B cell (primary cell): ENCODE measurements at regions of chr17 and their contacts with region 1.

Region 1: DNA sequence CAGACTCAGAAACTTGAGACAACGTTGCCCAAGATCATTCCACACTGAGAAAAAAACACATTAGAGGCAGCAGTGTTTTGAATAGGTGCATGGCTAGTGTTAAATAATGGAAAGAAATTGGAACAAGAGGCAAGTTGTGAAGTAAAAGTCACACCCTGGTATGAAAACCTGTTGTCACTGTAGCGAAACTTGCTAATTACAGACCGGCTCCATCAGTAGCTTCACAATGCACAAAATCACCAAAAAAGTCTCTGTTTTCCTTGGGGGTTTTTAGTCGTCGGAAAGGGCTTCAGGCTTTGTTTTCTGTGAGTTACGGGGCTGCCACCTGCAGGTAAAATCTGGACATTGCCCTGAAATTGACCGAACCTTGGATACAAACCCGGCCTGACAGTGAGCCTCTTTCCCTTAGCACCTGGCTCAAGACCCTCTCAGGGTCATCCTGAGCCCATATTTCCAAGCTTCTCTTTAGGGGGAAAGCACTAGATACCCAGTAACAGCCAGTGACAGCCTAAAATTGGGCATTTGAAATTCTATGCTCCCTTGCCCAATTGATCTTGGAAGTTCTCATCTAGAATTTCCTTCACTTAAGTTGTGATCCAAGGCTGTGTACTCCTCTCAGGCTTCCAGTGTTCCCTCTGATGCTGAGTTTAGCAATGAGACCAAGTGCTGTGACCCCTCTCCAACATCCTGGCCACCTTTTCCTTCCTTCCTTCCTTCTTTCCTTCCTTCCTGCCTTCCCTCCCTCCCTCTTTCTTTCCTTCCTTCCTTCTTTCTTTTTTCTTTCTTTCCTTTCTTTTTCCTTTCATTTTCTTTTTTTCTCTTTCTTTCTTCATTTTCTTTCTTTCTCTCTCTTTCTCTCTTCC is 7.2 kb upstream of the GRB2 start:
- DNase-seq: peak; percentile 90
- ATAC-seq: peak; percentile 94
- H3K4me3 ChIP-seq: peak overlapping the region in 4 of 5 experiments; percentile 9 to 30 (median 23)
- H3K4me3 Mint-ChIP-seq: peak overlapping the region; percentile 68
- H3K27ac ChIP-seq: no peak overlapping the region
- H3K27ac Mint-ChIP-seq: peak overlapping the region; percentile 62
- H3K4me1 ChIP-seq: peaks cover 7 to 14% of the 10 kb centered on the region in 2 donors
- H3K4me1 Mint-ChIP-seq: peaks cover 13% of the 10 kb centered on the region
- H3K27me3 ChIP-seq: no peaks in the 10 kb centered on the region
- H3K27me3 Mint-ChIP-seq: no peaks in the 10 kb centered on the region
- CTCF ChIP-seq: peak; percentile 79

Region 2: DNA sequence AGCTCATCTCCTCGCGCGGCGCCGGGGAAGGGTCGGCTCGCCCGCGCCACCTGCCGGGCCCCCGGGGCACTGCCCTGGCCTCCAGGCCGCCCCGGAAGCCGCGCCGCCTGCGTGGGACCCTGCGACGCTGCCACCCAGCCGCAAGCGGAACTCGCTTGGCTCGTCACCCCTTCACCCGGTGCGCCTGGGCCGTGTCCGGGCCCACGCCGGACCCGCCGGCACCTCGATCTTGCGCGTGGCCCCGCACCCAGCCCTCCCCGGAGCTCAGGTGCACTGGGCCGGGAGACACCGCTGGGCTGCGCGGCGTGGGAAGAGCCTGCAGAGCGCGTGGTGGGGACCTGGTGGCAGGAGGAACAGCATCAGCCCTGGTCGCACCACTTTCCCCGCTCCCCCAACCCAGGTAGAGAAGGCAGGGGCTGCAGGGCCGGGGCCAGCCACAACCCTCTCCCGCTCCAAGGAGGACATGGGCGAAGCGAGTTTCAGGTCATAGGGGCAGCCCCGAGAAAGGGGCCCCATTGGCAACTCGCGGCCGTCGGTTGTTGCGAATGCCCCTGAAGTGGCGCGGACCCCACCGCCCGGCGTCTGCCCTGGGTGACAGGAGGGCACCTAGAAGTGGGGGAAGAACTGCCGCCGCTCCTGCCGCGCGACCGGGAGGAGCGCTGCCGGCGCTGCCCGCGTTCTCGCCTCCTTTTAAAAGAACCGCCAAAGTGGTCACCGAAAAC is 141.3 kb before region 1 on chr17:
- CTCF ChIA-PET with region 1: interaction called, 33 read pairs
- POLR2A ChIA-PET with region 1: interaction called, 6 read pairs
- intact Hi-C with region 1: loop called (anchors 1 kb)
- DNase-seq: peak; percentile 94
- ATAC-seq: peak; percentile 90
- H3K4me3 ChIP-seq: peak overlapping the region; percentile 26 to 93 (median 74)
- H3K4me3 Mint-ChIP-seq: peak overlapping the region; percentile 88
- H3K27ac ChIP-seq: peak overlapping the region; percentile 78 to 83
- H3K27ac Mint-ChIP-seq: peak overlapping the region; percentile 82
- H3K4me1 ChIP-seq: peaks cover 17 to 28% of the 10 kb centered on the region in 2 donors
- H3K4me1 Mint-ChIP-seq: peaks cover 23% of the 10 kb centered on the region
- H3K27me3 ChIP-seq: no peaks in the 10 kb centered on the region
- H3K27me3 Mint-ChIP-seq: no peaks in the 10 kb centered on the region
- CTCF ChIP-seq: peak; percentile 73

Region 3: DNA sequence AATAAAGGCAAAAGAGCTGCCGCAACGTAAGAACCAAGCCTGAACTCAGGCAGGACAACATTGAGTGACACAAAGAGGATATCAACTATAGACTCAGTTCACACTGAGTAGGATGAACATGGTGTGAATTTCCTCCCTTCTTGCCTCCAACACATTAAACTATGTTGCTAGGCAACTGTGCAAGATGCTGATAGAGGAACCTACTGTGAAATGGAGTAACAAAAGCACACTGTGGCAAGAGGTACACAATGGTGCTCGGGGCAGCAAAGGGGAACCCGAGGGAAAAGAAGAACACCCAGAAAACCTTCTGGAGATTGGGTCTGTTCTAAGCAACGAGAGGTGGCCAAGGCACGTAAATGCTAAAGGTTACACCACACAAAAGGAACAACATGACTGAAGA is 41.3 kb before region 1 on chr17:
- CTCF ChIA-PET with region 1: interaction called, 12 read pairs
- POLR2A ChIA-PET with region 1: interaction called, 4 read pairs
- intact Hi-C with region 1: no loop called
- DNase-seq: peak; percentile 73
- ATAC-seq: peak; percentile 62
- H3K4me3 ChIP-seq: peak overlapping the region in 1 of 5 experiments; percentile 3
- H3K4me3 Mint-ChIP-seq: peak overlapping the region; percentile 74
- H3K27ac ChIP-seq: peak overlapping the region; percentile 42 to 76
- H3K27ac Mint-ChIP-seq: peak overlapping the region; percentile 84
- H3K4me1 ChIP-seq: peaks cover 64 to 85% of the 10 kb centered on the region in 2 donors
- H3K4me1 Mint-ChIP-seq: peaks cover 80% of the 10 kb centered on the region
- H3K27me3 ChIP-seq: no peaks in the 10 kb centered on the region
- H3K27me3 Mint-ChIP-seq: no peaks in the 10 kb centered on the region
- CTCF ChIP-seq: no peak

Region 4: DNA sequence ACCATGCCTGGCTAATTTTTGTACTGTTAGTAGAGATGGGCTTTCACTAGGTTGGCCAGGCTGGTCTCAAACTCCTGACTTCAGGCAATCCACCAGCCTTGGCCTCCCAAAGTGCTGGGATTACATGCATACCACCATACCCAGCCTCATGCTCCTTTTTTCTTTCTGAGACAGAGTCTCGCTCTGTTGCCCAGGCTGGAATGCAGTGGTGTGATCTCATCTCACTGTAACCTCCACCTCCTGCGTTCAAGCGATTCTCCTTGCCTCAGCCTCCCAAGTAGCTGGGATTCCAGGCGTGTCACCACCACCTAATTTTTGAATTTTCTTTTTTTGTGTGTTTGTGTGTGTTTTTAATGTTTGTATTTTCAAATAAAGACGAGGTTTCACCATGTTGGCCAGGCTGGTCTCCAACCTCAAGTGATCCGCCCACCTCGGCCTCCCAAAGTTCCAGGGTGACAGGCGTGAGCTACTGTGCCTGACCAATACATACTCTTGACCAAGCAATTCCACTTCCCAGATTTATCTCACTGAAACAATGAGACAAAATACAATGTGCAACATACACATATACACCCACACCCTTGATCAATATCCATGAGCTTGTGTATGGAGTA is 12.3 kb before region 1 on chr17:
- CTCF ChIA-PET with region 1: interaction called, 13 read pairs
- POLR2A ChIA-PET with region 1: no interaction called
- intact Hi-C with region 1: no loop called
- DNase-seq: no peak
- ATAC-seq: no peak
- H3K4me3 ChIP-seq: peak overlapping the region in 1 of 5 experiments; percentile 29
- H3K4me3 Mint-ChIP-seq: peak overlapping the region; percentile 67
- H3K27ac ChIP-seq: peak overlapping the region in 1 of 2 donors; percentile 28
- H3K27ac Mint-ChIP-seq: peak overlapping the region; percentile 37
- H3K4me1 ChIP-seq: peaks cover 53 to 82% of the 10 kb centered on the region in 2 donors
- H3K4me1 Mint-ChIP-seq: peaks cover 63% of the 10 kb centered on the region
- H3K27me3 ChIP-seq: no peaks in the 10 kb centered on the region
- H3K27me3 Mint-ChIP-seq: no peaks in the 10 kb centered on the region
- CTCF ChIP-seq: no peak

Region 5: GRCh38 chr17:75712446-75712845 is 299.8 kb after region 1 on chr17:
- CTCF ChIA-PET with region 1: no interaction called
- POLR2A ChIA-PET with region 1: no interaction called
- intact Hi-C with region 1: no loop called
- DNase-seq: no peak
- ATAC-seq: no peak
- H3K4me3 ChIP-seq: no peak overlapping the region
- H3K4me3 Mint-ChIP-seq: no peak overlapping the region
- H3K27ac ChIP-seq: no peak overlapping the region
- H3K27ac Mint-ChIP-seq: no peak overlapping the region
- H3K4me1 ChIP-seq: no peaks in the 10 kb centered on the region
- H3K4me1 Mint-ChIP-seq: peaks cover 2% of the 10 kb centered on the region
- H3K27me3 ChIP-seq: no peaks in the 10 kb centered on the region
- H3K27me3 Mint-ChIP-seq: peaks cover 3% of the 10 kb centered on the region
- CTCF ChIP-seq: no peak